Activated naive CD8-positive, alpha-beta T cell treated with anti-CD3 and anti-CD28 coated beads, Interleukin-2, amount 10 ng/mL, durations not matched to agents 7 days and 5 days (primary cell): ENCODE measurements at regions of chr11 and their contacts with region 1.

Region 1: GRCh38 chr11:67401495-67402191 is at the start of gene PPP1CA:
- DNase-seq: peak; percentile 98
- ATAC-seq: peak; percentile 55
- H3K4me3 Mint-ChIP-seq: peak within 1 kb of the TSS; percentile 98
- H3K27ac Mint-ChIP-seq: peak within 1 kb of the TSS; percentile 95
- H3K4me1 Mint-ChIP-seq: peaks cover 40% of the 10 kb centered on the region
- H3K27me3 Mint-ChIP-seq: no peaks in the 10 kb centered on the region
- total RNA-seq, gene PPP1CA: 290 to 311 TPM

Region 2: DNA sequence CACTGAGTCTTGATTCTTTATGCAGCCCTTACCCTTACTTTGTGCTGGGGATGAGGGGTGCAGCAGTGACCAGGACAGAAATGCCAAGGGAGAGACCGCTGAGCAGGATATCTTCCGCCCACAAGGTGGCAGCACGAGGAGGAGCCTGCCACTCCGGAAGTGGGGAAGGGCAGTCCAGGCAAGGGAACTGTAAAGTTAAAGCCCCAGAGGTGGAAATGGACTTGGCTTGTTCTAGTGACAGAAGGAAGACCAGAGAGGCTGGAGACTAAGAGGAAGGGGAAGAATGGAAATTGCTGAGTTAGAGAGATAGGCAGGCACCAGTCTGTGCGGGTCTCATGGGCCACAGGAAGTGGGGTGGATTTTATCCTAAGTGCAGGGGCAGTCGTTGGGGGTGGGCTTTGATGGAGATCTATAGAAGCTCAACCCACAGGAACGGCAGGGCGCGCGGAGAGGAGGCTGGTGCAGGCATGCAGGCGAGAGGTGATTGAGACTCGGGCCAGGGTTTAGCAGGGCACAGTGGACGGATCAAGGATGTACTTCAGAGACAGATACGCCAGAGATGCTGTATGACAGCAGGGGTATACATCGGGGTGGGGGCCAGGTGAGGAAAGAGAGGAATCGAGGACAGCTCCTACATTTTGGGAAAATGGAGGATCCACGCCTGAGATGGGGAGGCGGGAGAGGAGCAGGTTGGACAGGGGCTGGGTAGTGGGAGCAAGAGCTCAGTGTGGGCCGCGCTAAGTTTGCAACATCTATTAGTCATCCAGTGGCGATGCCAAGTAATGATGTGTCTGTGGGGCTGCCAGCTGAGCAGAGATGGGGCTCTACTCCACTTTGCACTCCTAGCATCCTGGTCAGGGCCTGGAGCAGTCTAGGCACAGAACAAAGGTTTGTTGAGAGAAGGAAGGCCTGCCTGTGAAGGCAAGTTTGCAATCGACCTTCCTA is 138.6 kb before region 1 on chr11:
- POLR2A ChIA-PET with region 1: no interaction called
- DNase-seq: peak; percentile 78
- ATAC-seq: peak; percentile 40
- H3K4me3 Mint-ChIP-seq: peak overlapping the region; percentile 65
- H3K27ac Mint-ChIP-seq: peak overlapping the region; percentile 80
- H3K4me1 Mint-ChIP-seq: peaks cover 48% of the 10 kb centered on the region
- H3K27me3 Mint-ChIP-seq: no peaks in the 10 kb centered on the region

Region 3: GRCh38 chr11:67391304-67392132 is 10.1 kb before region 1 on chr11 and contains the start of gene RAD9A:
- POLR2A ChIA-PET with region 1: interaction called, 91 read pairs
- DNase-seq: peak; percentile 93
- ATAC-seq: peak; percentile 68
- H3K4me3 Mint-ChIP-seq: peak within 1 kb of the TSS; percentile 96
- H3K27ac Mint-ChIP-seq: peak within 1 kb of the TSS; percentile 75
- H3K4me1 Mint-ChIP-seq: peaks cover 36% of the 10 kb centered on the region
- H3K27me3 Mint-ChIP-seq: no peaks in the 10 kb centered on the region
- total RNA-seq, gene RAD9A: 65.3 to 67.1 TPM

Region 4: GRCh38 chr11:67428052-67428914 is 26.6 kb after region 1 on chr11 and contains the start of gene RPS6KB2:
- POLR2A ChIA-PET with region 1: interaction called, 491 read pairs
- DNase-seq: peak; percentile 99
- ATAC-seq: peak; percentile 91
- H3K4me3 Mint-ChIP-seq: peak within 1 kb of the TSS; percentile 97
- H3K27ac Mint-ChIP-seq: peak within 1 kb of the TSS; percentile 93
- H3K4me1 Mint-ChIP-seq: peaks cover 33% of the 10 kb centered on the region
- H3K27me3 Mint-ChIP-seq: no peaks in the 10 kb centered on the region
- total RNA-seq, gene RPS6KB2: 69.0 to 71.4 TPM

Region 5: GRCh38 chr11:67482825-67483798 is 81.5 kb after region 1 on chr11 and contains the start of gene AIP:
- POLR2A ChIA-PET with region 1: interaction called, 80 read pairs
- DNase-seq: peak; percentile 94
- ATAC-seq: peak; percentile 81
- H3K4me3 Mint-ChIP-seq: peak within 1 kb of the TSS; percentile 93
- H3K27ac Mint-ChIP-seq: peak within 1 kb of the TSS; percentile 100
- H3K4me1 Mint-ChIP-seq: peaks cover 47% of the 10 kb centered on the region
- H3K27me3 Mint-ChIP-seq: peaks cover under 1% of the 10 kb centered on the region
- total RNA-seq, gene AIP: 161 to 166 TPM